Testis (tissue), 5 donors: ENCODE measurements at regions of chr20 and their contacts with region 1.

Region 1: GRCh38 chr20:14051454-14051853 is 56.1 kb downstream of the MACROD2 start:
- DNase-seq: no peak
- H3K4me3 ChIP-seq: no peak overlapping the region
- H3K27ac ChIP-seq: no peak overlapping the region
- H3K4me1 ChIP-seq: no peaks in the 10 kb centered on the region
- H3K27me3 ChIP-seq: no peaks in the 10 kb centered on the region
- CTCF ChIP-seq: no peak
- POLR2A ChIP-seq: no peak

Region 2: GRCh38 chr20:13819885-13820645 is 231.4 kb before region 1 on chr20:
- intact Hi-C with region 1: loop called (anchors 5 kb)
- DNase-seq: peak; percentile 40
- H3K4me3 ChIP-seq: no peak overlapping the region
- H3K27ac ChIP-seq: no peak overlapping the region
- H3K4me1 ChIP-seq: no peaks in the 10 kb centered on the region
- H3K27me3 ChIP-seq: no peaks in the 10 kb centered on the region
- CTCF ChIP-seq: peak; percentile 44 to 83 (median 67)
- POLR2A ChIP-seq: no peak

Region 3: GRCh38 chr20:13891575-13891974 is 159.9 kb before region 1 on chr20:
- intact Hi-C with region 1: no loop called
- DNase-seq: no peak
- H3K4me3 ChIP-seq: no peak overlapping the region
- H3K27ac ChIP-seq: no peak overlapping the region
- H3K4me1 ChIP-seq: no peaks in the 10 kb centered on the region
- H3K27me3 ChIP-seq: no peaks in the 10 kb centered on the region
- CTCF ChIP-seq: no peak
- POLR2A ChIP-seq: no peak